Activated naive CD4-positive, alpha-beta T cell treated with anti-CD3 and anti-CD28 coated beads, Interleukin-2, amount 10 ng/mL, durations not matched to agents 7 days and 5 days (primary cell): ENCODE measurements at regions of chr4 and their contacts with region 1.

Region 1: DNA sequence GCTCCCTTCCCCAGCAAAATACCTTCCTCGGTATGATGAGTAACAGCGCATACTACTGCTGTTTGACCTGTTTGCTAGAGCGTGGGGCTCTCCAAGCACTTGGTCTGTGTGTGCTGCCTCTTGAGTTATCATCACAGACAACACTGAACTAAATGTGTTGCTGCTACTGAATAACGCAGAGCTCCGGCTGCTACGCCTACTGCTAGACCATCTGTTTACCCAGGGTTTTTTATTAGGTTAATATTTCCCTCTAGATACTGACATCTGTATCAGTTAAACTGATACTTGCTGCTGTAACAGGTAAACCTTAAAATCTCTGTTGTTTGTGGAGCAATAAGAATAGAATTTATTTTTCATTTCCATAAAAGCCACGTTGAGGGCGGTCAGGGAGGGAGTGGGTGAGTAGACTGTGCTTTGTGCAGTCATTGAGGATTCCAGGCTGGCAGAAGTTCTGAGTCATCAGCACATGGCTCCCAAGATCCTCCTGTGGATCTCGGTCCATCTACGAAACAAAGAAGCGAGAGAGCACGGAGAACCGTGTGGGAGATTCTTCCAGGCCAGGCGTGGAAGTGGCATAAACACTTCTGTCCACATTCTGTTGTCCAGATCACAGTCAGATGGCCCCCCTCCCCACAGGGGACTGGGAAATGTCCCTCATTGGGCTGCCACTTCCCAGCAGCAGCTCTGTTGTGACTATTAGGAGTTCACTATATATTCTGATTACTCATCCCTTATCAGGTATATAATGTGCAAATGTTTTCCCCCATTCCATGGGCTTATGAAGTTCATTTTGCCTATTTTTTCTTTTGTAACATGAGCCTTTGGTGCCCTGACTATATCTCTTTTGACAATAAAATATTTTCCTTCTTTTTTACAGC is 14.1 kb downstream of the GRK4 start:
- DNase-seq: no peak
- H3K4me3 Mint-ChIP-seq: no peak overlapping the region
- H3K27ac Mint-ChIP-seq: peak overlapping the region; percentile 58
- H3K4me1 Mint-ChIP-seq: peaks cover 2% of the 10 kb centered on the region
- H3K27me3 Mint-ChIP-seq: peaks cover 41% of the 10 kb centered on the region

Region 2: DNA sequence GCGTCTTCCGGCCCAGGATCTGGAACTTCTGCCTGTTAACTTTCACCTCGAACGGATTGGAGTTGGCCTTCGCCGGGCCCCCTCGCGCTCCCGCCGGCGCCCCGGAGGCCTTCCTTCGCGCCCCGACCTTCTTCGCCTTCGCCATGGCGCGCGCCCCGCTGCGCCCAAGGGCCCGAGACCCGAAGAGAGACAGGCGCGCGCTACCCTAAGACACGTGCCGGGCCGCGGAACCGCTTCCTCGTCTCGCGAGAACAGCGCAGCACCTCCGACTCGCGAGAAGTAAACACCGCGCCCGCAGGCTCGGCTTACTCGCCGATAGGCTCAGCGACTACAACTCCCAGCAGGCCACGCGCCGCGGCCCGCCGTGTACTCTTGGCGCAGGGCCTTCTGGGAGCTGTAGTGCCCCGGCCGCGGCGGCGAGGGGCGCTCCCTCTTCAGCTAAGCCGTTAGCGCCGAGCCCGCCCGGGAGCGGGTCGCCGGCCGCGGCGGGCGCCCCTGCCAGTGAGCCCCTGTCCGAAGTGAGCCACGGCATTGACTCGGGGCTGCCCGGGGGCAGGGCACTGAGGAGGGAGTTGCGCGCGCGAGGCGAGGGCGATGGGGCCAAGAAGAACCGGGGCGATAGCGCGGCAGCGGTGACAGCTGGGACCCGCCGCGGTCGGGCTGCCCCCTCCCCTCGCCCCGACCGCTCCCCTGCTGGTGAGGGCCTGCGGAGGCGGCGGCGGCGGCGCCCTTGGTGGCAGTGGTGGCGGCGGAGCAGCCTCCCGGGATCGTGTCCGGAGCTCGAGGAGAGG is 14.1 kb before region 1 on chr4 and contains the starts of genes GRK4 and NOP14:
- CTCF ChIA-PET with region 1: interaction called, 25 read pairs
- DNase-seq: peak; percentile 99
- H3K4me3 Mint-ChIP-seq: peak within 1 kb of the TSS; percentile 80
- H3K27ac Mint-ChIP-seq: peak within 1 kb of the TSS; percentile 90
- H3K4me1 Mint-ChIP-seq: peaks cover 34% of the 10 kb centered on the region
- H3K27me3 Mint-ChIP-seq: peaks cover 3% of the 10 kb centered on the region

Region 3: GRCh38 chr4:3037957-3038461 is 60.6 kb after region 1 on chr4:
- CTCF ChIA-PET with region 1: interaction called, 19 read pairs
- DNase-seq: peak; percentile 49
- H3K4me3 Mint-ChIP-seq: peak overlapping the region; percentile 39
- H3K27ac Mint-ChIP-seq: peak overlapping the region; percentile 86
- H3K4me1 Mint-ChIP-seq: peaks cover 55% of the 10 kb centered on the region
- H3K27me3 Mint-ChIP-seq: peaks cover 41% of the 10 kb centered on the region

Region 4: DNA sequence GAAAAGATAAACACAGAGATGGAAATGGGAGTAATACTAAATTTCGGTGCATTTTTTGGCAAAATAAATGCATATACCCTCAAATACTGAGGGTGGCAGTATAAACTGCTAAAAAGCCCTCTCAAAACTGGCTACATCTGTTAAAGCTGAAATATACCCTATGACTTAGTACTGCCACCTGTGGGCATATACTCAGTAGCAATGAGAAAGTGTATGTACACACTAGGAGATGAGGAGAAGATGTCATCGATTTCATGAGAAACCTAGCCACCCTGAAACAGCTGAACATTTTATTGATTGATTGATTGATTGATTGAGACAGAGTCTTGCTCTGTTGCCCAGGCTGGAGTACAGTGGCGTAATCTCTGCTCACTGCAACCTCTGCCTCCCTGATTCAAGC is 1282.8 kb after region 1 on chr4:
- CTCF ChIA-PET with region 1: no interaction called
- DNase-seq: no peak
- H3K4me3 Mint-ChIP-seq: no peak overlapping the region
- H3K27ac Mint-ChIP-seq: no peak overlapping the region
- H3K4me1 Mint-ChIP-seq: no peaks in the 10 kb centered on the region
- H3K27me3 Mint-ChIP-seq: peaks cover 17% of the 10 kb centered on the region